IMR-90 (cell line): ENCODE measurements at regions of chr7 and their contacts with region 1.

Region 1: GRCh38 chr7:129781928-129782817 is 170.6 kb downstream of the UBE2H start:
- DNase-seq: no peak
- ATAC-seq: no peak
- H3K4me3 ChIP-seq: no peak overlapping the region
- H3K27ac ChIP-seq: no peak overlapping the region
- H3K4me1 ChIP-seq: peaks cover 2% of the 10 kb centered on the region; the same call in 1 of the 2 replicates
- H3K27me3 ChIP-seq: peaks cover 96% of the 10 kb centered on the region
- CTCF ChIP-seq: no peak
- POLR2A ChIP-seq: no peak
- RAD21 ChIP-seq: no peak

Region 2: DNA sequence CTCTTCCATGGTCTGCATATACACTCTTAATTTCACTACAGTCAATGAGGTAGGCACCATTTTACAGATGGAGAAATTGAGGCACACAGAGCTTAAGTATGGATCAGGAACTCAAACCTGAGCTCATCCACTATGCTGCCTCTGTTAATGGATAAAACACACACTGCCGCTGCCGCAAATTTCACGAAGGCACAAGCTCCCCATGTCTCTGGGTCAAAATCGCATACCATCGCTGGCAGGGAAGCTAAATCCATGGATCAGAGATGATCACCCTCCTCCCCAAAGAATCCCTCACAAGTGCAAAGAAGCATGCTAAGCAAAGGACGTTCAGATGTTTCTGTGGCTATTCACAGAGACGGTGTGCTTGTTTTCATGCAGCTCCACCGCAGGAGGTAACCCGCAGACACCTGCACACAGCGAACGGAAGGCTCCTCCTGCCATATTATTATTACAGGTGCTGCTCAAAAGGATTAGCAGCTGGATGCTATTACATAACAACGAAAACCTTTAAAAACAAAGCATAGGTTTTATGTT is 61.3 kb after region 1 on chr7:
- CTCF ChIA-PET with region 1: interaction called, 15 read pairs
- POLR2A ChIA-PET with region 1: no interaction called
- dilution Hi-C with region 1: no loop called
- in situ Hi-C with region 1: no loop called
- intact Hi-C with region 1: no loop called
- DNase-seq: no peak
- ATAC-seq: no peak
- H3K4me3 ChIP-seq: no peak overlapping the region
- H3K27ac ChIP-seq: no peak overlapping the region
- H3K4me1 ChIP-seq: peaks cover 20% of the 10 kb centered on the region
- H3K27me3 ChIP-seq: no peaks in the 10 kb centered on the region
- CTCF ChIP-seq: no peak
- POLR2A ChIP-seq: no peak
- RAD21 ChIP-seq: no peak